ENCODE measurements at regions of chr11 and their contacts with region 1.

Region 1: GRCh38 chr11:102546923-102547471 is 16.4 kb upstream of the MMP7 start:
- DNase-seq: peak; percentile 52
- ATAC-seq: peak; percentile 79
- H3K4me3 Mint-ChIP-seq: peak overlapping the region; percentile 52
- H3K27ac Mint-ChIP-seq: peak overlapping the region; percentile 91
- H3K4me1 Mint-ChIP-seq: peaks cover 72% of the 10 kb centered on the region
- H3K27me3 Mint-ChIP-seq: no peaks in the 10 kb centered on the region
- CTCF ChIP-seq: no peak

Region 2: DNA sequence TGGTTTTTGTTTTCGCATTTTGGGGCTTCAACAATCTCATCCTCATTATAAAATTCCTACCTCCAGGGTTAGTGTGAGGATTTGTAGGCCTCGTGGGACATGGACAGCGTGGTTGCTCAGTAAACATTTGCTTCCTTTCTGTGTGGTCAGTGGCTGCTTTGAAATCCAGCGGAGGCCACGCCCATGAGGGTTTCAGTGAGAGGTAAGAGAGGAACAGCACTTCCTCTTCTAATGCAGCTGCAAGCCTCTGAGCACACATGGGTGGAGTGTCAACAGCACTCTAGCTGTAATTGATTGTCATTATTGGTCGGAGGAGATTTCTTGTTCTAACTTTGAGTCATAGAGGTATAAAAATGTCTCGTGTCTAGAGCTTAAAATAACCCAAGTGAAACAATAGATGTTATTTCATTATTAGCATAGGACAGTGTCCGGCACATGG is 1865.9 kb before region 1 on chr11:
- CTCF ChIA-PET with region 1: no interaction called
- POLR2A ChIA-PET with region 1: no interaction called
- intact Hi-C with region 1: loop called (anchors 2 kb)
- DNase-seq: peak; percentile 58
- ATAC-seq: peak; percentile 98
- H3K4me3 Mint-ChIP-seq: peak overlapping the region; percentile 35
- H3K27ac Mint-ChIP-seq: peak overlapping the region; percentile 79
- H3K4me1 Mint-ChIP-seq: peaks cover 57% of the 10 kb centered on the region
- H3K27me3 Mint-ChIP-seq: no peaks in the 10 kb centered on the region
- CTCF ChIP-seq: no peak

Region 3: GRCh38 chr11:102287964-102288724 is 258.9 kb before region 1 on chr11:
- CTCF ChIA-PET with region 1: no interaction called
- POLR2A ChIA-PET with region 1: no interaction called
- intact Hi-C with region 1: loop called (anchors 2 kb)
- DNase-seq: no peak
- ATAC-seq: peak; percentile 84
- H3K4me3 Mint-ChIP-seq: peak overlapping the region; percentile 74
- H3K27ac Mint-ChIP-seq: peak overlapping the region; percentile 57
- H3K4me1 Mint-ChIP-seq: peaks cover 37% of the 10 kb centered on the region
- H3K27me3 Mint-ChIP-seq: no peaks in the 10 kb centered on the region
- CTCF ChIP-seq: no peak

Region 4: DNA sequence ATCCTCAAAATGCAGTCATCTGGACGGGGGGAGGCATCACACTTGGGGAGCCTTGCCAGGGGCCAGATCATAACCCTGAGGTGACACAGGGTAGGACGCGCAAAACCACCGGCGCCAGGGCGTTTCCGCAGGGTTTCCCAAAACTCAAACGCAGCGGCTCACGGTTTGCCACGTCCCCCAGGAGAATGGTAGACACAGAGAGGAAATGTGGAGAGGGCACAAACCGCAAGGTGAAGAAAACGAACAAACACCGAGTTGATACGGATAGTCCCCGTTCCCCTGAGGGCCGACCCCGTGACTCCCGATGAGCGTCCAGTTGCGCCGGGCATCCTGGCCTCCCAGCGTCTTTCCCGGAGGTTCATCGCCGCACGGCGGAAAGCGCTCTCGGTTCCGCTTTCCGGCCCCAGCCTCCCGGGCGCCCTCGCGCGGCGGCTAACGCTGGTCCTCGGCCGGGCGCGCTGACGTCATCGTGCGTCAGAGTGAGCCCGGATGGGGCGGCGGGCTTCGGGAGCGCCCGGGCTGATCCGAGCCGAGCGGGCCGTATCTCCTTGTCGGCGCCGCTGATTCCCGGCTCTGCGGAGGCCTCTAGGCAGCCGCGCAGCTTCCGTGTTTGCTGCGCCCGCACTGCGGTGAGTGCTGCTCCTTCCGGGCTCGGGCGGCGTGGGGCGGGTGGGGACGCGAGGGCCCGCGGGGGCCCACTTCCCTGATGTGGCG is 200.1 kb before region 1 on chr11 and contains the start of gene BIRC2:
- CTCF ChIA-PET with region 1: interaction called, 7 read pairs
- POLR2A ChIA-PET with region 1: interaction called, 3 read pairs
- intact Hi-C with region 1: loop called (anchors 1 kb)
- DNase-seq: peak; percentile 98
- ATAC-seq: peak; percentile 86
- H3K4me3 Mint-ChIP-seq: peak within 1 kb of the TSS; percentile 93
- H3K27ac Mint-ChIP-seq: peak within 1 kb of the TSS; percentile 95
- H3K4me1 Mint-ChIP-seq: peaks cover 38% of the 10 kb centered on the region
- H3K27me3 Mint-ChIP-seq: no peaks in the 10 kb centered on the region
- CTCF ChIP-seq: no peak
- total RNA-seq, gene BIRC2: 27.1 and 34.9 TPM in 2 replicates

Region 5: GRCh38 chr11:102476812-102477211 is 70.2 kb before region 1 on chr11:
- CTCF ChIA-PET with region 1: no interaction called
- POLR2A ChIA-PET with region 1: interaction called, 6 read pairs
- intact Hi-C with region 1: loop called (anchors 1 kb)
- DNase-seq: no peak
- ATAC-seq: no peak
- H3K4me3 Mint-ChIP-seq: peak overlapping the region; percentile 17
- H3K27ac Mint-ChIP-seq: peak overlapping the region; percentile 65
- H3K4me1 Mint-ChIP-seq: peaks cover 47% of the 10 kb centered on the region
- H3K27me3 Mint-ChIP-seq: no peaks in the 10 kb centered on the region
- CTCF ChIP-seq: no peak

Region 6: DNA sequence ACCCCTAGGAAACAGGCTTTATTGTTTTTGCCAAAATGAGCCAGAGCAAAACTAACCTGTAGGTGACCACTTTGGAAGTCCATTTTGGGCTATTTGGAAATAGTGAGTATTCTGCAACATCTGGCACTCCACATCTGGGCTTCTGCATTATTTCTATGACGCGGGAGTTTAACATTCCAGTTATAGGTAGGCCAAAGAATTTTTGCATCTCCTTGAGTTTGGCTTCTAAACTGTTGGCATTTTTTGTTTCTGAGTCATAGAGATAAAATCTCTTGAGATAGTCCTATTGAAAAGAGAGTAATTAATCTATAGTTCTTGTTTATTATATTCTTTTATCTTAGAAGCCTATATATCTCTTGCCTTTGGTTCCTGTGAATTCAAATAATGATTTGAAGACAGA is 19.3 kb before region 1 on chr11:
- CTCF ChIA-PET with region 1: interaction called, 5 read pairs
- POLR2A ChIA-PET with region 1: no interaction called
- intact Hi-C with region 1: loop called (anchors 2 kb)
- DNase-seq: no peak
- ATAC-seq: no peak
- H3K4me3 Mint-ChIP-seq: no peak overlapping the region
- H3K27ac Mint-ChIP-seq: no peak overlapping the region
- H3K4me1 Mint-ChIP-seq: peaks cover 14% of the 10 kb centered on the region
- H3K27me3 Mint-ChIP-seq: no peaks in the 10 kb centered on the region
- CTCF ChIP-seq: no peak

Region 7: DNA sequence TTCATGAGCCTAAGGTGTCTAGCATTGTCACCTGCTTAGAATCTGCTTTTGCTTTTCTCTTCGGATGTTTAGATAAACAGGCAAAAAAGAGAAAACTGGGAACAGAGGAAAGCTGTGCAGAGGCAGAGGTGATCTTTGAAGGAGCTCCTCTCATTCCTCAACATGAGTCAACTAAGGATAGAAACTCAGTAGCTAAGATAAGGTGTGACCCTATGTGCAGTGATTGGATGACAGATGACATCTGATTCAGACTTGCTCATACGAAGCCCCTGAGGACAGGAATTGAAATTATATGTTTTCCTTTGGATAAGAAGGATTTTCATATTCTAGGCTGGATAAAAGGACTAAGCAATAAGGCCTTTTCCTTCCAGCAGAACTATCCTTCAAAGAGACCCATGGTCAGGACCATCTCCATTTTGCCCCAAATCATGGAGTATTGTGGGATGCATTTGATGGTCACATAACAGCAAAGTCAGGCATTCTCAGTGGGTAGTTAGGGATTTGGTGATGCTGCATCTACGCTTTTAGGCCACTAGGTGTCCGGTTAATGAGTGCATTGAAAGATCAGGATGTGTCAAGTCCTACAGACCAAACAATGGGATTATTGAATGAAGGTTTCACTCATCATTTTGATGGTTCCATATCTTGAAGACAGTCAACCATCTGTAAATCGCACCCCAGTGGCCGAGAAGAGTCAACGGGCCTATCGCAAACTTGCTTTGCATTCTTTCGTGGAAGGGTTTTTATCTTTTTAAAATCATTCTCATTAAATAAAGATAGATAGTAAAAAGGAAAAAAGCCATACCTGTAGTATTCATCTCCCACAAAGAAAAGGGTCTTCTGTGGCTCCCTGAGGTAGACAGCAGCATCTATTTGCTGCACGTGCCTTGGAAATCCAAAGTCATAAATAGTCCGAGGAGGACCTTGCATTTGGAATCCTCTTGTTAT is 45.9 kb after region 1 on chr11:
- CTCF ChIA-PET with region 1: interaction called, 3 read pairs
- POLR2A ChIA-PET with region 1: interaction called, 5 read pairs
- intact Hi-C with region 1: loop called (anchors 1 kb)
- DNase-seq: no peak
- ATAC-seq: no peak
- H3K4me3 Mint-ChIP-seq: no peak overlapping the region
- H3K27ac Mint-ChIP-seq: no peak overlapping the region
- H3K4me1 Mint-ChIP-seq: peaks cover 40% of the 10 kb centered on the region
- H3K27me3 Mint-ChIP-seq: no peaks in the 10 kb centered on the region
- CTCF ChIP-seq: no peak